ENCODE measurements at regions of chr14 and their contacts with region 1.

Region 1: DNA sequence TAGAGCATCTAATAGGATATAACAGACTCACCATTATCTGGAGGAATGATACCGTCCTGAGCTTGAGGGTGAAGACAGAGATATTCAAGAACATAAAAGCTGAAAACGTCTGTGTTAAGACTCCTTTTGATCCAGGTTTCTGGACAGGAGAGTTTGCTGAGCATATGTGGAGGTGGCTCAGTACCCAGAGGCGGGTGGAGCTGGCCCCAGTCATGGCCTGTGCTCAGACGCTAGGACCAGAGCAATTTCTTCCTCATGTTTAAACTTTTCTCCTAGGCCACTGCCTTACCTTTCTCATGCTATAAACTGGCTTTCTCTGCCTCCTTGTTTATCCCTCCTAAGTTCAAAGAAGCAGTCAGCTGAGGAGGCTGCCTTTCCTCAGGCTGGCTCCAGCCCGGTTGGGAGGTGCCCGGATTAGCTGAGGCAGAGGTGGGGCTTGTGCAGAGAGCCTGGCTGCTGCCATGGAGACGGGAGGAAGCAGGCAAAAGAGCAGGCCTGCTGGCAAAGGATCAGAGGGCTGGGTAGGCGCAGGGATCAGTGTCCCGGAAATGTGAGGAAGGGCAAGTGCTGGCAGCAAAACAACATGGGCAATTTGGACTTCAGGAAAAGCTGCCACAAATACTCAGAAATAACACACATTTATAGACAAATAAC is 13.7 kb downstream of the COA8 start:
- DNase-seq: peak; percentile 91
- ATAC-seq: peak; percentile 96

Region 2: GRCh38 chr14:103679351-103679750 is 102.9 kb after region 1 on chr14:
- intact Hi-C with region 1: loop called (anchors 10 kb)
- DNase-seq: peak; percentile 60
- ATAC-seq: peak; percentile 73

Measured in left ventricle myocardium superior (tissue), 1 donor.